MCF 10A (cell line): ENCODE measurements at regions of chr1 and their contacts with region 1.

Region 1: GRCh38 chr1:204162231-204163074 is 3.7 kb downstream of the REN start:
- DNase-seq: peak; percentile 95
- H3K4me3 Mint-ChIP-seq: no peak overlapping the region
- H3K27ac Mint-ChIP-seq: no peak overlapping the region
- H3K4me1 Mint-ChIP-seq: peaks cover 6% of the 10 kb centered on the region
- H3K27me3 Mint-ChIP-seq: no peaks in the 10 kb centered on the region
- CTCF ChIP-seq: peak; percentile 100

Region 2: DNA sequence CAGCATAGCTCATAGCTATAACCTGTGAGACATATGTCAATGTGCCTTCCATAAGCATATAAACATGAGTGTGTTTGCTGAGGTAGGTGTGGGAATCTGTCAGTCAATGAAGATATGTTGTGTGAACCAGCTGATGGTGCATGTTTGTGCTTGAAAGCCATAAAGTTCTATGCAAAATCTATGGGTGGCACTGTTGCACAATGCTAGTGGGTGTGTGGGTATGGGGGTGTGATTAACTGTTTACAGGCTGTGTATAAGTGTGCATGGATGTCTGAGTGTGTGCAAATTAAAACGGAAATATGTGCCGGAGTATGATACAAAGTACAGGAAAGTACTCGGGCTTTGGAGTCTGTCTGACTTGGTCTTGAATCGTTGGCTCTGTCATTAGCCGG is 536.8 kb before region 1 on chr1:
- CTCF ChIA-PET with region 1: no interaction called
- POLR2A ChIA-PET with region 1: no interaction called
- intact Hi-C with region 1: no loop called
- DNase-seq: peak; percentile 96
- H3K4me3 Mint-ChIP-seq: peak overlapping the region; percentile 75
- H3K27ac Mint-ChIP-seq: peak overlapping the region; percentile 91
- H3K4me1 Mint-ChIP-seq: peaks cover 53% of the 10 kb centered on the region
- H3K27me3 Mint-ChIP-seq: no peaks in the 10 kb centered on the region
- CTCF ChIP-seq: peak; percentile 28

Region 3: GRCh38 chr1:203861379-203862184 is 300.9 kb before region 1 on chr1 and contains the start of gene SNRPE:
- CTCF ChIA-PET with region 1: interaction called, 25 read pairs
- POLR2A ChIA-PET with region 1: interaction called, 10 read pairs
- intact Hi-C with region 1: loop called (anchors 1 kb)
- DNase-seq: peak; percentile 100
- H3K4me3 Mint-ChIP-seq: peak within 1 kb of the TSS; percentile 100
- H3K27ac Mint-ChIP-seq: peak within 1 kb of the TSS; percentile 100
- H3K4me1 Mint-ChIP-seq: peaks cover 43% of the 10 kb centered on the region
- H3K27me3 Mint-ChIP-seq: no peaks in the 10 kb centered on the region
- CTCF ChIP-seq: peak; percentile 100
- total RNA-seq, gene SNRPE: 358 and 423 TPM in 2 replicates

Region 4: GRCh38 chr1:204145033-204145504 is 17.4 kb before region 1 on chr1:
- CTCF ChIA-PET with region 1: interaction called, 89 read pairs
- POLR2A ChIA-PET with region 1: interaction called, 3 read pairs
- intact Hi-C with region 1: no loop called
- DNase-seq: no peak
- H3K4me3 Mint-ChIP-seq: no peak overlapping the region
- H3K27ac Mint-ChIP-seq: peak overlapping the region; percentile 41
- H3K4me1 Mint-ChIP-seq: peaks cover 41% of the 10 kb centered on the region
- H3K27me3 Mint-ChIP-seq: no peaks in the 10 kb centered on the region
- CTCF ChIP-seq: no peak

Region 5: DNA sequence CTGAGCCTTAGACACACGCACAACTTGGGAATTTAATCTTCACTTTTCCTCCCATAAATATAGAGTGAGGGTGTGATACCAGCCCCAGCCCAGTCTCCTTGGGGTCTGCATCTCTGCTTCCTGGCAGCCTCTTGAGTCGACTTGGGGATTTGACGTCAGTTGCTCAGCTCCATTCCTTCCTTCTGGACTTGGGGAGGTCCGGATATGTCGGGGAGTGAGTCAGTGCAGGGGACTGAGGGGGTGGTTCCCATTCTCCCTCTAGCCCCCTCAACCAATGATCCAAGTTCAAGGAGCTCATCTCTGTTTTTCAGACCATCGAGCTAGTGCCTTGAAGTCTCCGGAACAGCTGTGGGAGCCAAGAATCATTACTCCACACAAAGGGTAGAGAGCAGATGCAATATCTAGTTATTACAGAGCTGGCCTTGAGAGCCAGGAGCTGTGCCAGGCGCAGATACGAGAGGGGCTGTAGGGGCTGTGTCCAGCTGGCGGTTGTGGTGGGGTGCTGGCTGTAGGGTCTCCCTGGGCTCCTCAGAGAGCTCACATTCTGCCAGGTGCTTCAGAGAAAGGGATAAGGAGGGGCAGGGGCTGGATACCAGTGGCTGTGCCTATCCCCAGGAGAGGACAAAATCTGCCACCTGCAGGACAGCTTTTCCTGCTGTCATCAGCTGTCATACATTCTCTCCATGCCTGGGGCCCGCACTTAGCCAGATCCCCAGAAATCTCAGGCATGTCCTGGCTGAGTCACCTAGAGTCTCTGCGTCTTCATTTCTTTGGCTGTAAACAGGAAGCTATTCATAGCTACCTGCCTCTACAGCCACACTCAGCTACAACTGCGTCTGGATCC is 35.9 kb after region 1 on chr1:
- CTCF ChIA-PET with region 1: interaction called, 505 read pairs
- POLR2A ChIA-PET with region 1: interaction called, 5 read pairs
- intact Hi-C with region 1: loop called (anchors 1 kb)
- DNase-seq: peak; percentile 83
- H3K4me3 Mint-ChIP-seq: no peak overlapping the region
- H3K27ac Mint-ChIP-seq: no peak overlapping the region
- H3K4me1 Mint-ChIP-seq: peaks cover 6% of the 10 kb centered on the region
- H3K27me3 Mint-ChIP-seq: peaks cover 18% of the 10 kb centered on the region
- CTCF ChIP-seq: peak; percentile 37

Region 6: DNA sequence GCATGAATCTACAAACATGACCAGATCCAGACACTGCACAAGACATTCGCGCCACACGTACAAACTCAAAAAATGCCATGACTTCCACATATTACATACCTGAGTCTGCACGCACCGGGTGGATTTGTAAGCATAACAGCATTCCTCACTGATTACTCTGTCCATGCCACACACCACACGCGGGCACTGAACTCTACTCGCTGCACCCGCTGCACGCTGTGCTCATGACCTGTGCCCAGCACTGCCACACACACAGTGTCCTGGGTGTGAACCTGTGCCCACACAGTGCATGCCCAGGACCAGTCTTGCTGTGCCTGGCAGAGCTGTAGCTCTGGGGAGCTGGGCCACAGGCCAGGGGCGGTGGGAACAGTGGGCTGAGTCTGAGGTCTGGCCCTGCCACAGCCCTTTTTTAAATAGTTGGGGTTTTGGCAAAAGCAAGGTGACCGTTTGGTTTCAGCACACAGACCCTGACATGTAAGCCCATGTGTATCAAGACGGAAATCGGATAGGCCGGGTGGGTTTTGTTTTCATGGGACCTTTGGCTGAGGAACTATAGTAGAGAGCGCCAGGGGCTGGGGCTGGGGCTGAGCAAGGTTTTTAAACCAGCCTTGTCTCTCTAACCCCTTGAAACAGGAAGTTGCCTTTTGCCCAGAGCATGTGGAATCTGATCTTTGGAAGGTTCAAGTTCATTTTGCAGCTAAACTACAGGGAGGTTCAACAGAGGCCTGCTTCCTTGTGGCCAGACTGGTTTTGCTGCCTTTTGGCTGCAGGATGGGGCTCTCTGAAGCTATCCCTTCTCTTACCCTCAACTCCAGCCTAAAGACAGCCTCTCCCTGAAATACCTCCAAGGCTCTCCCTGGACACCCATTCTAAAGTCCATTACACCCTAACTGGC is 63.6 kb after region 1 on chr1:
- CTCF ChIA-PET with region 1: interaction called, 20 read pairs
- POLR2A ChIA-PET with region 1: no interaction called
- intact Hi-C with region 1: no loop called
- DNase-seq: peak; percentile 34
- H3K4me3 Mint-ChIP-seq: no peak overlapping the region
- H3K27ac Mint-ChIP-seq: peak overlapping the region; percentile 1
- H3K4me1 Mint-ChIP-seq: peaks cover 18% of the 10 kb centered on the region
- H3K27me3 Mint-ChIP-seq: no peaks in the 10 kb centered on the region
- CTCF ChIP-seq: no peak

Region 7: DNA sequence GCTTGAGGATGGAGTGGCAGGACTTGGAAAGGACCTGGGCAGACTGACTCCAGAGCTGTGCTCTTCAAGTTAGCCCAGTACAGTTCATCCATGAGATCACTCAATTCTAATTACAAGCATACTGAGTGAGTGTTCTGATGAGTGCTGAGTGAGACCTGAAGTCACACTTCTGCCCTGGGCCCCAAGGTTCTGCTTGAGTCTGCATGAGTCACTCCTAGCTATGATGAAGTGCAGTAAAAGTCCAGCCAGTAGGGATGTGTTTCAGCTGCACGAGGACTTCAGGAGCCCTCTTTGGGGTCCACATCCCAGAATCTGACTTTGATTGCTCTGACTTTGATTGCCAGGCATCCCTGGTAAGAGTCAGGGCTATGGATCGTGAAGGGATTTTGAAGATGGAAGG is 161.4 kb after region 1 on chr1:
- CTCF ChIA-PET with region 1: interaction called, 15 read pairs
- POLR2A ChIA-PET with region 1: no interaction called
- intact Hi-C with region 1: no loop called
- DNase-seq: peak; percentile 81
- H3K4me3 Mint-ChIP-seq: no peak overlapping the region
- H3K27ac Mint-ChIP-seq: peak overlapping the region; percentile 2
- H3K4me1 Mint-ChIP-seq: peaks cover 54% of the 10 kb centered on the region
- H3K27me3 Mint-ChIP-seq: no peaks in the 10 kb centered on the region
- CTCF ChIP-seq: no peak

Region 8: DNA sequence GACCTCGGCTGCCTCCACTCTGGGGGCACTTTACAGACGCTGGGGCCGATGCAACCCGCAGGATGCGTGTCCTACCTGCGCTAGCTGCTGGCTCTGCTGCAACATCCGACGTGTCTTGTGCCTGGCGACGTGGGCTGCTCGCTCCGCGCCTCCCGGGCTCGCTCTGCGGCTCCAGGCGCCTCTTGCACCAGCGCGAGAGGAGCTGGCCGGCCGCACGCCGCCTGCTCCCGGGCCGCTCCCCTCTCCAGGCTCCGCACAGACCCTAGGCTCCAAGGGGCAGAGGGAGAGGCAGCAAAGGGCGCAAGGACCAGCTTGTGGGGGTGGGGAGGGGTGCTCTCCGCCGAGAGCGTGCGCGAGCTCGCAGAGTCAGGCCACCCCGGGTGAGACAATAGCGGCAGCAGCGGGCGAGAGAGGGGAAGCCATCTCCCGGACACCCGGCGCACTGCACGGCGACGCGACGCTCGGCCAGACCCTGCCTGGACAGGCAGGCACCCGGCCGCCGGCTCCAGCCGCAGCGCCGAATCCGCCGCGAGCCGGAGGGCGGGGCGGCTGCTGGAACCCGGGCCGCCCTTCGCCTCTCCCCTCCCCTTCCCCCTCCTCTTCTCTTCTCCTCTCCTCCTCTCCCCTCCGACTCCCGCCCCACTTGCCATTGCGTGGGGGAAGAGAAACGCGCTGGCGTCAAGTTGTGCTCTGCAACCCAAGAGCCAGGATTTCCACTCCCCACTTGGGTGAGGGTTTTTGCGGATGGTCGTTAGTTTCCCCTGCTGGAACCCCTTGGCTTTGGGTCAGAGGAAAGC is 332.0 kb after region 1 on chr1 and contains the start of gene PIK3C2B:
- CTCF ChIA-PET with region 1: interaction called, 17 read pairs
- POLR2A ChIA-PET with region 1: interaction called, 5 read pairs
- intact Hi-C with region 1: no loop called
- DNase-seq: peak; percentile 92
- H3K4me3 Mint-ChIP-seq: peak within 1 kb of the TSS; percentile 86
- H3K27ac Mint-ChIP-seq: peak within 1 kb of the TSS; percentile 24
- H3K4me1 Mint-ChIP-seq: peaks cover 26% of the 10 kb centered on the region
- H3K27me3 Mint-ChIP-seq: peaks cover 41% of the 10 kb centered on the region
- CTCF ChIP-seq: peak; percentile 93
- total RNA-seq, gene PIK3C2B: 3.4 and 4.4 TPM in 2 replicates